ENCODE measurements at regions of chr11 and their contacts with region 1.

Region 1: GRCh38 chr11:76380967-76381719 is at the starts of genes GVQW3 and THAP12:
- DNase-seq: peak; percentile 92
- H3K4me3 ChIP-seq: peak within 1 kb of the TSS; percentile 61
- CTCF ChIP-seq: no peak

Region 2: DNA sequence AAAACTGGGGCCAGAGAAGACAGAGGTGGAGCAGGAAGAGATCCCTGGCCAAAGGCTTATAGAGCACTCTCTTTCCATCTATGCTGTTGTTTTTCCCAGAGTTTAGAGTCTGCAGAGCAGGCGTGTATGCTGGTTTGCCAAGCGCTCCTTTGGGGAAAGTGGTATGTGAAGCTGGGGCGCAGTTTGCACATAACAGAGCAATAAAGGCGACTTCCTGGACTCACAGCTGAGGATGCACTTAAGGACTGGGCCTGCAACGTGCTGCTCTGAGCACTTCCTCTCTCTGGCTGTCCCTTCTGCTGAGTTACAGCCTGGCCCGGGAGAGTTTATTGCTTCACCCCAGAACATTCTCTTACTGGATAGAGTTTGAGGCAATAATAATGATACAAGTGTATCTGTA is 41.9 kb before region 1 on chr11:
- in situ Hi-C with region 1: no loop called
- DNase-seq: no peak
- H3K4me3 ChIP-seq: no peak overlapping the region
- CTCF ChIP-seq: no peak

Region 3: DNA sequence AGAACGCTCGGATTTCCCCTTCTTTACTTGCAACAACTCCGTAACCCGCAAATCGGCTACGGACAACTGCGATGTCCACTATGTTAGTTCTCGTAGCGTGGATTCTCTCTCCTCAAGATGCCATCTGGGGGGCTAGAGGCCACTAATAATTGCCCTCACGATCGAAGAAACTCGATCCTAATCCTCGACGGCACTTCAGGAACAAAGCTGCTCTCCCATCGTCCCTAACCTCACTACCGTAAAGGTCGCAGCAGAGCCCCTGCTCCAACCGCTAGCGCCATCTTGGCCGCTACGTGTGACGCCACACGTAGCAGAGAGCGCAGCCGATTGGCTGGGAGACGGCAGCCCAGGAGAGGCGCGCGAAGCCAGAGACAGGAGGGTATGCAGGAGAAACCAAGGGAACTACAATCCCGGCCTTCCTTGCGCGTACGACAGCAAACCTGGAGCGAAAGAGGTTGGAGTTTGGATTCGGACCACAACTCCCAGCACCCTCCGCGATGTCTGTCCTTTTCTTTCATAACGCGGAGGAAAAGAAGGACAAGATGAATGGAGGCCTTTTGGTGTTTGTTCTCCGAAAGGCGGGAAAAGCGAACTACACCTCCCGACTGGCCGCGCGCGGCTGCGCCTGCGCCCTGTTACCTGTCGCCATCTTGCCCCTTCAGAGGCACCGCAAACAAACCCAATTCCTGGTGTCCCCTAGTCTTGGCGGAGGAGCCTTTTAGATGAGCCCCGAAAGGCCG is 63.4 kb after region 1 on chr11 and contains the start of gene EMSY:
- in situ Hi-C with region 1: loop called (anchors 5 kb)
- DNase-seq: peak; percentile 100
- H3K4me3 ChIP-seq: peak within 1 kb of the TSS; percentile 100
- CTCF ChIP-seq: no peak

Region 4: DNA sequence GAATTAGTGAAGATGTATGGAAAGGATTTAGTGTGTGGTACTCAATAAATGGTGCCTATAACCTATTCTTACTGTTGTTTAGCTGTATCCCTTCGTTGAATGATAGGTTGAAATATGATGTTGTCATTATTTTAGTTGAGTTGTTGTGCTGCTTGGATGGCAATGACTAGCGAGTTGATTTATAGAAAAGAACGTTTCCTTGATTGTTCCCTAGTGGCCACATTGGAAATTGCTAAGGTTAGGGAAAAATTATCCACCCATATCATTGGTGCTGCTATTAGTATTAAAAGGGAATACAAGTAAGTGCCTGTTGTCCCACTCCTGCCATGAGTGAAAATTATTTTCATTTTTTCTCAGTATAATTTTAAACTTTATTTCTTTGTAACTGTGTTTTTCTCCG is 78.2 kb after region 1 on chr11:
- in situ Hi-C with region 1: no loop called
- DNase-seq: no peak
- H3K4me3 ChIP-seq: no peak overlapping the region
- CTCF ChIP-seq: peak; percentile 32